ENCODE measurements at regions of chr1 and their contacts with region 1.

Region 1: DNA sequence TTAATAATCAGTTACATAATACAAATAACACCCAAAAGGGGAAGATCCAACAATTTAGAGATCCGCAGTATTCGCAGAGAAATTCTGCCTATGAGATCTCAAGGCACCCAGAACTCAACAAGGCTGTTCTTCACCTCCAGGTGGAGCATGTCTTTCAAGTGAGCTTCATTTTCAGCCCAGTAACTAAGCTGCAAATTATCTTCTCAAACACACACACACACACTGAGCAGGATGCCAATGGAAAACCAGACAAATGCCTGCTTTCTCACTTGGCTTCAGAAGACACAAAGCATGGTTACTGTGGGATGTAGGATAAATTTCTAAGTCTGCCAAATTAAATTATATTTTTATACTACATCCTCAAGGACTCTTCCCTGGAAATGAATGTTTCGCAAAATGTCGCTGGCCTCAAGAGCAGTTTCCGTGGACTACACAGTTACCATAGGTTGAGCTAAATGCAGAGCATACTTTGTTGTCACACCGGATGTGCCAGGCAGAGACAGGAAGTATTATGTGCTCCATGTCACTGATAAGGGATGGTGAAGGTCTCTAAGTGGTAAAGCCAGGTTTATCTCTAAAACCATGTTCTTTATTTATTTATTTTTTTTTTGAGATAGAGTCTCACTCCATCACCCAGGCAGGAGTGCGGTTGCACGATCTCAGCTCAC is 30.3 kb downstream of the UBR4 start:
- DNase-seq: no peak
- H3K4me3 ChIP-seq: no peak overlapping the region
- H3K27ac ChIP-seq: no peak overlapping the region
- H3K4me1 ChIP-seq: no peaks in the 10 kb centered on the region
- H3K27me3 ChIP-seq: no peaks in the 10 kb centered on the region
- CTCF ChIP-seq: peak; percentile 13 to 34 (median 28)
- EP300 ChIP-seq: no peak
- POLR2A ChIP-seq: no peak

Region 2: DNA sequence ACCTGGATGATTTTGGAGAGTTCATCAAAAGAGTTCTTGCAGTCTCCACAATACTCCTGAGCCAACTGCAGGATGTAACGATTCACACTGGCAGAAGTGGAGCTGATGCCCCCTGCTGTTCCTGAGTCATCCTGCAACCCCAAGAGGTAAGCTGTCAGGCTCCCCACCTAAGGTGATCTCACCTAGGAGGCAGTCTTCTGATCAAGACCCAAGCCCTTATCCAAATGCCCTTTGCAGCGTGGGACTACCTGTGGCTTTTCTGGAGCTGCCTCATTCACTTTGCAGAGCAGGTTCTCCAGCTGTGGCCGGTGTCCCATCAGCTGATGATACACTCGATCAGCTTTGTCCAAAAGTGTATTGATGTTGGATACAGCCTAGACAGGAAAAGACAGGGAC is 66.0 kb before region 1 on chr1:
- intact Hi-C with region 1: loop called (anchors 10 kb)
- DNase-seq: no peak
- H3K4me3 ChIP-seq: no peak overlapping the region
- H3K27ac ChIP-seq: no peak overlapping the region
- H3K4me1 ChIP-seq: no peaks in the 10 kb centered on the region
- H3K27me3 ChIP-seq: no peaks in the 10 kb centered on the region
- CTCF ChIP-seq: peak in 1 of 3 experiments; percentile 19
- EP300 ChIP-seq: no peak
- POLR2A ChIP-seq: no peak

Region 3: DNA sequence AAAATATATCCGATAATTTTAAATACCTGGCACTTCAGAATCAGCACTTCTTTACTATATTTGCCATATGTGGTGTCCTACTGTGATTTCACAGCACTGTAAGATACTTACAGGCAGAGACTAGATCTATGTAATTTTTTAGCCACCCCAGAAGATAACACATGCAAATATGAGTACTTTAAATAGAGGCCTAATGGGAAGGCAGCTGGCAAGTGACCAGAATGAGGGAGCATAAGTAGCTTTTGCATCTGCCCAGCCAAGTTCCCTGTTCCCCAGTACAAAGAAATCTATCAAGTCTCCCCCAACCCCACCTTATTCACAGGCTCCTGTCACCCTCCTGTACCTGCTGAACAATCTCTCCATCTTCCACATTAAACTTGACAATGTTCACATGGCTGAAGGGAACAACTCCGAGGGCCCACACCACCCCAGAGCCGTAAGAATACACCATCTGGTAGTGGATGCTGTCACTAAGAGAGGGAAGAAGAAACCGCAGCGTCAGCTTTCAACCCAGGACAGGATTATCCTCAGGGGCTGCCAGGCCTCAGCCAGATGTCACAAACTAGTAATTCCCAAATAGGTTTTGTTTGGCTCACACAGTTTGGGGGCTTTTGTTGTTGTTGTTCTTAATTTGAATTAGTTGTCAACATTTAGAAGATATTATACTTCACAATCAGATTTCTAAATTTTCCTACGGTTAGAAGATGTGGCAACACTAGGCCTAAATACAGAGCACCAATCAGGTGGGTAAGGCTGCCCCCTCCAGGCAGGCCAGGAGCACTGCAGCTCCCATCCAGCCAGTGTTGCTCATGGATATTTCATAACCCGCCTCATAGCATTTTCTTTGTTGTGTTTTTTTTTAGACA is 61.2 kb after region 1 on chr1:
- intact Hi-C with region 1: loop called (anchors 5 kb)
- DNase-seq: no peak
- H3K4me3 ChIP-seq: no peak overlapping the region
- H3K27ac ChIP-seq: peak overlapping the region; percentile 56 to 68 (median 62)
- H3K4me1 ChIP-seq: peaks cover 3 to 9% (median 8%) of the 10 kb centered on the region in 4 donors
- H3K27me3 ChIP-seq: no peaks in the 10 kb centered on the region
- CTCF ChIP-seq: peak; percentile 96 to 98 (median 97)
- EP300 ChIP-seq: no peak
- POLR2A ChIP-seq: no peak

Measured in esophagus muscularis mucosa (tissue), 4 donors.